ENCODE measurements at regions of chr18 and their contacts with region 1.

Region 1: GRCh38 chr18:49898421-49898820 is 85.1 kb upstream of the ACAA2 start:
- DNase-seq: peak in 1 of 2 donors; percentile 60
- ATAC-seq: peak in 1 of 8 donors; percentile 35
- H3K4me3 ChIP-seq: no peak overlapping the region
- H3K27ac ChIP-seq: no peak overlapping the region
- H3K4me1 ChIP-seq: no peaks in the 10 kb centered on the region
- H3K27me3 ChIP-seq: peaks cover 0 to 12% (median 0%) of the 10 kb centered on the region in 7 donors
- CTCF ChIP-seq: no peak

Region 2: DNA sequence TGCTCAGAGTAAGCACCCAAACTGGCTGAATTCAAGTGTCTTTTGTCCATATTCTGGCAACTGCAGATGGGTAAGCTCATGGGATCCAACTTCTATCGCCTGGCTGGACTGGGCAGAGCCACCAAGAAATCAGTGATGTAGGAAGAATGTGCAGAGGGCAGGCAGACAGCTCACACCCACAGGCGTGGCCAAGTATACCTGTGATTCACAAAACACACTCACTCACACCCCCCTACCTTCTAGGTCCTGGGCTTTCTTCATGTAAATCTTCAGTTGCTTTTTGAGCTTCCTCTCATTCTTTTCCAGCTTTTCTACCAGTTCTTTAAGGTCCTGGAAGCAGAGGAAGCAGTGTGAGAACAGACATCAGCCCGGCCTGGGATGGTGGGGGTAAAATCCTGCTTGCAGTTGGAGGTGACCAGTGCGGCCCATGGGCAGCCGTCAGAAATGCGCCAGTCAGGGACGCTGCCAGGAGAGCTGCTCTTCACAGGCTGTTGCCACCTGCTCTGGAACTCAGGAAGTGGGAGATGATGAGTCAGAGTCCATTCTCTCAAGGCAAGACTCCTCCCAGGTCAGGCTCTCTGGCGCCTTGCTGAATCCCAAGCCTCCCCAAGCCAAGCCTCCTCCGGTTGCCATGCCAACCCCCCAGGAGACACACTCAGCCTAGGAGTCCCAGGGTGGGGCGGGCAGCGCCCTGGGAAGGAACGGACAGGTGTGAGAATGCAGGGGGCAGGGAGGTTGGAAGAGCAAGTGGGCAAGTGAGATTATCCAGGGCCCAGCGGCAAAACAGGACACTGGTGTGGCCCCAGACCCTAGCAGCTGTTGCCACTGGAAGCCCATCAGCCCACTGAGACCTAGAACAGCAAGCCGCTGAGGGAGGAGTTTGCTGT is 48.8 kb before region 1 on chr18:
- intact Hi-C with region 1: loop called in 1 of 10 experiments (anchors 10 kb)
- DNase-seq: peak in 1 of 2 donors; percentile 30
- ATAC-seq: peak in 6 of 8 donors; percentile 22 to 80 (median 49)
- H3K4me3 ChIP-seq: no peak overlapping the region
- H3K27ac ChIP-seq: no peak overlapping the region
- H3K4me1 ChIP-seq: peaks cover 0 to 6% (median 0%) of the 10 kb centered on the region in 9 donors
- H3K27me3 ChIP-seq: peaks cover 0 to 26% (median 4%) of the 10 kb centered on the region in 7 donors
- CTCF ChIP-seq: no peak

Measured in heart right ventricle (tissue), 16 donors.